ENCODE measurements at regions of chr13 and their contacts with region 1.

Region 1: GRCh38 chr13:42392716-42393572 is 121.0 kb downstream of the AKAP11 start:
- DNase-seq: peak; percentile 58
- ATAC-seq: peak; percentile 55
- H3K4me3 Mint-ChIP-seq: peak overlapping the region; percentile 78
- H3K27ac Mint-ChIP-seq: peak overlapping the region; percentile 99
- H3K4me1 Mint-ChIP-seq: peaks cover 74% of the 10 kb centered on the region
- H3K27me3 Mint-ChIP-seq: no peaks in the 10 kb centered on the region
- CTCF ChIP-seq: no peak

Region 2: GRCh38 chr13:42215578-42216421 is 177.1 kb before region 1 on chr13:
- CTCF ChIA-PET with region 1: no interaction called
- POLR2A ChIA-PET with region 1: no interaction called
- intact Hi-C with region 1: no loop called
- DNase-seq: peak; percentile 56
- ATAC-seq: peak; percentile 66
- H3K4me3 Mint-ChIP-seq: no peak overlapping the region
- H3K27ac Mint-ChIP-seq: no peak overlapping the region
- H3K4me1 Mint-ChIP-seq: no peaks in the 10 kb centered on the region
- H3K27me3 Mint-ChIP-seq: no peaks in the 10 kb centered on the region
- CTCF ChIP-seq: peak; percentile 30

Region 3: DNA sequence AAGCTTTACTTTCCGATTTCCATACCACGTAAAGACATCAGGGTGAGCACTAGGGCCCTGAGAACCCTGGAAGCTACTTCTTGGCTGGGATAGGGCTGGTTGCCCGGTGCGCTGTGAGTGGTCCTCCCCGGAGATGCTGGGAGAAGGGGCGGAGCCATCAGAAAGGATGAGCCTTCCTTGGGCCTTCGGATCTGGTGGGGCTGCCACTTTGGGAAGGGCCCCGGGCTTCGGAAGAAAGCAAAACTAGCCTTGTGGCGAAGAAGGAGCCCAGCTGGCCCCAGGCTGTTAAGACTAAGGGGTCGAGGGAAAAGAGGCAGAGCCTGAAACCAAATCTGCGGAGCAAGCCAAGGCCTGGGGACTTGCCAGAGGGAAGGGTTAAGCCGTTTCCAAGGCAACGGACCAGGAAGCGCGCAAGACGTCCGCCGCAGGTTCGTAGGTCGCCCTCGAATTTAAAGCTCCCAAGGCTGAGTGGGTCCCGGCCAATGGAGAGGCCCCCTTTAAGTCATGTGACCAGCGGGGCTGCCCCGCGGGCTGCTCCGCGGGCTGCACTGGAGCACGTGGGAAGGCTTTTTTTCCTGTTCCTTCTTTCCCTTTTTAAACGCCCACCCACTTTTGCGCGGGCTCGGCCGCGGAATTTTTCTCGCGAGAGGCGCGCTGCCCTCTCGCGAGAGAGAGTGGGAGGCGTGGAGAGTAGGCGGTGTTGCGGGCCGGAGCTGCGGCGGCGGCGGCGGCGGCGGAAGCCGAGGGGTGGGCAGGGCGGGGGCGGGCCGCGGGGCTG is 121.4 kb before region 1 on chr13:
- CTCF ChIA-PET with region 1: no interaction called
- POLR2A ChIA-PET with region 1: interaction called, 34 read pairs
- intact Hi-C with region 1: loop called (anchors 5 kb)
- DNase-seq: peak; percentile 96
- ATAC-seq: peak; percentile 86
- H3K4me3 Mint-ChIP-seq: peak overlapping the region; percentile 99
- H3K27ac Mint-ChIP-seq: peak overlapping the region; percentile 85
- H3K4me1 Mint-ChIP-seq: peaks cover 41% of the 10 kb centered on the region
- H3K27me3 Mint-ChIP-seq: no peaks in the 10 kb centered on the region
- CTCF ChIP-seq: no peak

Region 4: GRCh38 chr13:42354241-42355091 is 38.5 kb before region 1 on chr13:
- CTCF ChIA-PET with region 1: interaction called, 6 read pairs
- POLR2A ChIA-PET with region 1: interaction called, 18 read pairs
- intact Hi-C with region 1: loop called (anchors 2 kb)
- DNase-seq: peak; percentile 68
- ATAC-seq: peak; percentile 65
- H3K4me3 Mint-ChIP-seq: peak overlapping the region; percentile 70
- H3K27ac Mint-ChIP-seq: peak overlapping the region; percentile 97
- H3K4me1 Mint-ChIP-seq: peaks cover 69% of the 10 kb centered on the region
- H3K27me3 Mint-ChIP-seq: no peaks in the 10 kb centered on the region
- CTCF ChIP-seq: peak; percentile 35

Region 5: GRCh38 chr13:42405665-42406390 is 12.9 kb after region 1 on chr13:
- CTCF ChIA-PET with region 1: interaction called, 6 read pairs
- POLR2A ChIA-PET with region 1: interaction called, 26 read pairs
- intact Hi-C with region 1: loop called (anchors 1 kb)
- DNase-seq: peak; percentile 91
- ATAC-seq: peak; percentile 83
- H3K4me3 Mint-ChIP-seq: peak overlapping the region; percentile 33
- H3K27ac Mint-ChIP-seq: peak overlapping the region; percentile 90
- H3K4me1 Mint-ChIP-seq: peaks cover 56% of the 10 kb centered on the region
- H3K27me3 Mint-ChIP-seq: no peaks in the 10 kb centered on the region
- CTCF ChIP-seq: no peak

Region 6: GRCh38 chr13:42420304-42420703 is 27.4 kb after region 1 on chr13:
- CTCF ChIA-PET with region 1: no interaction called
- POLR2A ChIA-PET with region 1: no interaction called
- intact Hi-C with region 1: no loop called
- DNase-seq: peak; percentile 82
- ATAC-seq: peak; percentile 88
- H3K4me3 Mint-ChIP-seq: no peak overlapping the region
- H3K27ac Mint-ChIP-seq: peak overlapping the region; percentile 7
- H3K4me1 Mint-ChIP-seq: peaks cover 36% of the 10 kb centered on the region
- H3K27me3 Mint-ChIP-seq: no peaks in the 10 kb centered on the region
- CTCF ChIP-seq: no peak

Region 7: DNA sequence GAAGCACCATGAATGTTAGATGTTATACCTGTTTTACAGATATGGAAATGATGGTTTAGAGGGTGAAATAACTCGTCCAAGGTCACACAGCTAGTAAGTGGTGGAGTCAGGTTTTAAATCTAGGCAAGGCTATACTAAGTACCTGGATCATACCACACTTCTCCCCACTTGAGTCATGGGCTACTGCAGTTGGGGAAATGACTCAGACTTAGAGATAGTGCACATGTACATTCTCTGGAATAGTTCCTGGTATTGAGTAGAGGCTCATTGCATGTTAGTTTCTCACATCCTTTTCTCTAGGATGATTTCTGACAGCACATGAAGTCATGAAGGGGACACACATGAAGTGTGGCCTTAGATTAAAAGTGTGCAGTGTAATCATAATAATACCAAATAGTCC is 104.9 kb after region 1 on chr13:
- CTCF ChIA-PET with region 1: no interaction called
- POLR2A ChIA-PET with region 1: interaction called, 9 read pairs
- intact Hi-C with region 1: loop called (anchors 5 kb)
- DNase-seq: peak; percentile 53
- ATAC-seq: peak; percentile 86
- H3K4me3 Mint-ChIP-seq: no peak overlapping the region
- H3K27ac Mint-ChIP-seq: peak overlapping the region; percentile 44
- H3K4me1 Mint-ChIP-seq: peaks cover 46% of the 10 kb centered on the region
- H3K27me3 Mint-ChIP-seq: no peaks in the 10 kb centered on the region
- CTCF ChIP-seq: no peak